ENCODE measurements at regions of chr3 and their contacts with region 1.

Region 1: GRCh38 chr3:30982416-30983075 is 88.1 kb upstream of the GADL1 start:
- DNase-seq: no peak
- ATAC-seq: no peak
- H3K4me3 ChIP-seq: no peak overlapping the region
- H3K27ac ChIP-seq: no peak overlapping the region
- H3K4me1 ChIP-seq: no peaks in the 10 kb centered on the region
- H3K27me3 ChIP-seq: no peaks in the 10 kb centered on the region

Region 2: GRCh38 chr3:30970183-30970582 is 12.4 kb before region 1 on chr3:
- intact Hi-C with region 1: loop called in 1 of 2 experiments (anchors 2 kb)
- DNase-seq: no peak
- ATAC-seq: no peak
- H3K4me3 ChIP-seq: no peak overlapping the region
- H3K27ac ChIP-seq: no peak overlapping the region
- H3K4me1 ChIP-seq: no peaks in the 10 kb centered on the region
- H3K27me3 ChIP-seq: no peaks in the 10 kb centered on the region